Ascending aorta (tissue), 2 donors: ENCODE measurements at regions of chr11 and their contacts with region 1.

Region 1: DNA sequence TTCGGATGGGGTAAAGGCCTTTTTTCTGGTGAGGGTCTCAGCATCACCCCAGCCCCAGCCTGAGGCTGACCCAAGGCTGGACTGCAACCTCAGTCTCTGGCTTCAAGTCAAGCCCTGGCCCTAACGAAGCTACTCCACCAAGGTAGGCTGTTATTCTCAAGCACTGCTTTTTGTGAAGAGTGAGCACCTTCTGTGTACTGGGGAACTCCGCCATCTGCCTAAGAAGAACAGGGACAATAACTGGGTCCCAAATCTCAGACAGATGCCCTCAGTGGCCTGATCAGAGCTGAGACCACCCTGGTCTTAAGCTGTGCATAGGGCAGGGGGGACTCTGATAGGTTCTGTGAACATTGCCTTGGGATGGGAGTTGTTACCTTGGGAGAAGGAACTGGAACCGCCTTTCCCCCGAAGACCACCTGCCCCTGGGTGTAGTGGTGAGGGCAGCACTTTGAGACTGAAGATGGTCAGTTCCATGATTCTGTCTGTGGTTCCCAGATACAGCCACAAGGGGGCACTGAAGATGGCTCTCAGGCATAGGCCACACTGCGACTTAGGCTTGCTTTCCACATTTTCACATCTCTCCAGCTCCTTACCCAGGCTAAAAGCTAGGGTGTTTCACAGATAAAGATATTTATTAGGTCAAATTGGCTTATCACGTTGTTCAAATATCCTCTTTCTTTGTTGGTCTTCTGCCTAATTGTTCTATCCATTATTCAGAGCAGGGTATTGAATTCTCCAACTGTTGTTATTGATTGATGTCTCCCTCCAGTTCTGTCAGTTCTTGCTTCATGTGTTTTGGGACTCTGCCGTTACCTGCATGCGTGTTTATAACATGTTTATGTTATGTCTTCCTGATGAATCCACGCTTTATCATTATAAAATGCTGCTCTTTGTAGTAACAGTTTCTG is 11.8 kb upstream of the UVRAG start:
- DNase-seq: peak in 1 of 2 donors; percentile 89
- H3K4me3 ChIP-seq: no peak overlapping the region
- H3K27ac ChIP-seq: no peak overlapping the region
- H3K4me1 ChIP-seq: no peaks in the 10 kb centered on the region
- H3K27me3 ChIP-seq: no peaks in the 10 kb centered on the region
- CTCF ChIP-seq: peak; percentile 88 to 90 (median 89)

Region 2: DNA sequence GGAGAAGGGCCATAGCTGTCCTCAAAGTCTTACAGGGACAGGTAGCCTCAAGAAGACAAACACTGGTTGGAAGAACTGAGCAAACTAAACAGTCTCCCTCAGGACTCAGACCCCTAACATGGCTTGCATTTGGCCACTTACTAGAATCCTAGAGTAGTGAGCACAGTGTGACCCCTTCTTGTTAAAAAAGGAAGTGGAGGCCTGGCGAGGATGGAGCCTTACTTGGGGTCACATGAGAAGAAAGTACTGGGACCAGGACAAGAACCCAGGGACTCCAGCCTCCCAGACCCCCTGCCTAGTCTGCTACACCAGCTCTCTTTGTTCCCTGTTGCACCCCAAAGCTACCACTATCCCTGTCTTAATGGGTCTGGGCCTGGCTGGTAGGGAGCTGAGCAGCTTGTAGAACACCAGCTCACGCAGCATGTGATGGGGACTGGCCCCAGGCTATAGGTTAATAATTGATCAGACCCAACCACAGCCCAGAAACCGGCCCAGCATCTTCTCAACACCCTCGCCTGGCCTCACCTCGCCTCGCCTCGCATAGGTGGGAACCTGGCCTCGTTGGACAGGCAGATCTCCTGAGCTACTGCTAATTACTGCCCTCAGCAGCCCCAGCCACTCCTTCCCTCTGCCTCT is 16.9 kb before region 1 on chr11:
- intact Hi-C with region 1: no loop called
- DNase-seq: no peak
- H3K4me3 ChIP-seq: no peak overlapping the region
- H3K27ac ChIP-seq: no peak overlapping the region
- H3K4me1 ChIP-seq: no peaks in the 10 kb centered on the region
- H3K27me3 ChIP-seq: no peaks in the 10 kb centered on the region
- CTCF ChIP-seq: no peak

Region 3: DNA sequence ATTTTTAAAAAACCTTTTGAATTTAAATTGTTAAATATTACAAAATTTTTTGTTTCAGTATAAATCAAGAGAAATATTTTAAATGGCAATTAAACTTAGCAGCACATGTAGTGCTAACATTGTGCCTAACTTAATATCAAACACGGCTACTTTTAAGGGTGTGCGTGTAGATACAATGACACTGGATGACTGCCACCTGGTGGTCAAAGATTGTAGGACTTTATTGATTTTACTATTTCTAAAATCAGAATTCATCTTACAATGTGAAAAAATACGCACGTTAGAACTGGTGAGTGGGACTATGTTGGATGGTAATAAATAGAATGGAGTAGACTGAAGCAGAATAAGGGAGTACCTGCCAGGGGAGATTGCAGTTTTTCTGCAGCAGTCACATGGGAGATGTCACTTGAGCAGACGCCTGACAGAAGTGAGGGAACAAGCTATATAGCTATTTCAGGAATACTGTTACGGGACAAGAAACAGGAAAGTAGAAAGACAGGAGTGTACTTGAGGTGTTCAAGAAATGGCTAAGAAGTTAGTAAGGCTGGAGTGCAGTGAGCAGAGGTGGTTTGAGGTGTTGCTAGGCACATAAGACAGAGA is 64.7 kb after region 1 on chr11:
- intact Hi-C with region 1: loop called (anchors 1 kb)
- DNase-seq: no peak
- H3K4me3 ChIP-seq: no peak overlapping the region
- H3K27ac ChIP-seq: no peak overlapping the region
- H3K4me1 ChIP-seq: no peaks in the 10 kb centered on the region
- H3K27me3 ChIP-seq: no peaks in the 10 kb centered on the region
- CTCF ChIP-seq: peak; percentile 75 to 79 (median 77)

Region 4: GRCh38 chr11:76152086-76152681 is 349.0 kb after region 1 on chr11:
- intact Hi-C with region 1: loop called (anchors 2 kb)
- DNase-seq: peak; percentile 62 to 95
- H3K4me3 ChIP-seq: peak overlapping the region; percentile 46 to 59
- H3K27ac ChIP-seq: no peak overlapping the region
- H3K4me1 ChIP-seq: no peaks in the 10 kb centered on the region
- H3K27me3 ChIP-seq: no peaks in the 10 kb centered on the region
- CTCF ChIP-seq: peak; percentile 96 to 98 (median 96)

Region 5: DNA sequence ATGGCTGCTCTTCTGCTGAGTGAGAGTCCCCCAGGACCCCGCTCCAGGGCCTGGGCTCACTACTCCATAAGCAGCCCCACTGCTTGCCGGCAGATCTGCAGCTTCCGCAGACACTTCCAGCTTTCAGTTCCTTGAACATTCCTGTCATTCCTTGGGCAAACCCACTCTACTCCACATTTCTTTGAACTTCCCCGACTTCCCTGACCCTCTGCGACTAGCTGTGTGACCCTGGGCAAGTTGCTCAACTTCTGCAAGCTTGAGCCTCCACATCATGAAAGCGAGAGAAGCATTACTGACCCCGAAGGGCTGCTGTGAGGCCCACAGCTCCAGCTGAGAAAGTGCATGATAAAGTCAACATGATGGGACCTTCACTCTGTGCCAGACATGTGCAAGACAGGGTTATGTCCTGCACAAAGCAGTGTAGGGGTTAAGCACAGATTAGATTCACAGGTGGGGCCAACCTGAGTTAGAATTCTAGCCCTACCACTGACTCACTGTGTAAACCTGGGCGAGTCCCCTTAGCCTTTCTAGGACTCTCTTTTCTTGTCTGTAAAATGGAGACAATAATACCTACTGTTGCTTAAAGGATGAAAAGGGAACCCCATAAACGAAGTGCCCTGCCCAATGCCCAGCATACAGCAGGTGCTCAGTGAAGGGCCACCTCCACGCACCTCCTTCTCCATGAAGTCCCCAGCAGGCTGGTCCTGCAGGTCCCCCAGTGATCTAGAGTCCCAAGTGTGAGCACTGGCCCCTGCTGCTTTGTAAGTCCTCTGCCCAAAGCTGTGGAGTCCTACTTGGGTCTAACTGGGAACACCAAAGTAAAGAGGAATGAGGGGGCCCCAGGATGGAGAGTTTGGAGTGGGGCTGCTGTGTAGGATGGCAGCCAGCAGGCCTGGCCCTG is 526.2 kb after region 1 on chr11:
- intact Hi-C with region 1: loop called (anchors 10 kb)
- DNase-seq: peak in 1 of 2 donors; percentile 47
- H3K4me3 ChIP-seq: no peak overlapping the region
- H3K27ac ChIP-seq: no peak overlapping the region
- H3K4me1 ChIP-seq: no peaks in the 10 kb centered on the region
- H3K27me3 ChIP-seq: no peaks in the 10 kb centered on the region
- CTCF ChIP-seq: no peak